Activated CD4-positive, alpha-beta memory T cell treated with anti-CD3 and anti-CD28 coated beads for 36 hours (primary cell): ENCODE measurements at regions of chr13 and their contacts with region 1.

Region 1: GRCh38 chr13:24605923-24606372 is 74.3 kb upstream of the ATP12A start:
- DNase-seq: no peak
- H3K4me3 Mint-ChIP-seq: no peak overlapping the region
- H3K27ac Mint-ChIP-seq: no peak overlapping the region
- H3K4me1 Mint-ChIP-seq: peaks cover 11% of the 10 kb centered on the region
- H3K27me3 Mint-ChIP-seq: peaks cover 4% of the 10 kb centered on the region

Region 2: GRCh38 chr13:24618014-24618955 is 12.3 kb after region 1 on chr13:
- CTCF ChIA-PET with region 1: interaction called, 7 read pairs
- POLR2A ChIA-PET with region 1: interaction called, 3 read pairs
- intact Hi-C with region 1: loop called (anchors 2 kb)
- DNase-seq: peak; percentile 87
- H3K4me3 Mint-ChIP-seq: peak overlapping the region; percentile 23
- H3K27ac Mint-ChIP-seq: peak overlapping the region; percentile 81
- H3K4me1 Mint-ChIP-seq: peaks cover 28% of the 10 kb centered on the region
- H3K27me3 Mint-ChIP-seq: no peaks in the 10 kb centered on the region

Region 3: GRCh38 chr13:24625870-24626849 is 20.2 kb after region 1 on chr13:
- CTCF ChIA-PET with region 1: interaction called, 12 read pairs
- POLR2A ChIA-PET with region 1: no interaction called
- intact Hi-C with region 1: no loop called
- DNase-seq: peak; percentile 57
- H3K4me3 Mint-ChIP-seq: no peak overlapping the region
- H3K27ac Mint-ChIP-seq: peak overlapping the region; percentile 88
- H3K4me1 Mint-ChIP-seq: peaks cover 40% of the 10 kb centered on the region
- H3K27me3 Mint-ChIP-seq: no peaks in the 10 kb centered on the region

Region 4: GRCh38 chr13:24671386-24672107 is 65.6 kb after region 1 on chr13:
- CTCF ChIA-PET with region 1: interaction called, 30 read pairs
- POLR2A ChIA-PET with region 1: no interaction called
- intact Hi-C with region 1: loop called (anchors 2 kb)
- DNase-seq: no peak
- H3K4me3 Mint-ChIP-seq: no peak overlapping the region
- H3K27ac Mint-ChIP-seq: no peak overlapping the region
- H3K4me1 Mint-ChIP-seq: peaks cover 10% of the 10 kb centered on the region
- H3K27me3 Mint-ChIP-seq: peaks cover 12% of the 10 kb centered on the region